PC-9 (cell line): ENCODE measurements at regions of chr19 and their contacts with region 1.

Region 1: GRCh38 chr19:51660975-51661600 is 14.5 kb upstream of the SIGLEC14 start:
- DNase-seq: peak; percentile 48 to 72
- H3K4me3 ChIP-seq: no peak overlapping the region
- H3K27ac ChIP-seq: no peak overlapping the region
- H3K4me1 ChIP-seq: no peaks in the 10 kb centered on the region
- H3K27me3 ChIP-seq: peaks cover 47% of the 10 kb centered on the region
- CTCF ChIP-seq: peak; percentile 81

Region 2: GRCh38 chr19:51473009-51473707 is 187.9 kb before region 1 on chr19:
- CTCF ChIA-PET with region 1: interaction called, 12 read pairs
- POLR2A ChIA-PET with region 1: no interaction called
- intact Hi-C with region 1: loop called (anchors 1 kb)
- DNase-seq: peak in 1 of 2 experiments; percentile 59
- H3K4me3 ChIP-seq: no peak overlapping the region
- H3K27ac ChIP-seq: no peak overlapping the region
- H3K4me1 ChIP-seq: no peaks in the 10 kb centered on the region
- H3K27me3 ChIP-seq: peaks cover 23% of the 10 kb centered on the region; the same call in 1 of the 2 replicates
- CTCF ChIP-seq: peak; percentile 90

Region 3: DNA sequence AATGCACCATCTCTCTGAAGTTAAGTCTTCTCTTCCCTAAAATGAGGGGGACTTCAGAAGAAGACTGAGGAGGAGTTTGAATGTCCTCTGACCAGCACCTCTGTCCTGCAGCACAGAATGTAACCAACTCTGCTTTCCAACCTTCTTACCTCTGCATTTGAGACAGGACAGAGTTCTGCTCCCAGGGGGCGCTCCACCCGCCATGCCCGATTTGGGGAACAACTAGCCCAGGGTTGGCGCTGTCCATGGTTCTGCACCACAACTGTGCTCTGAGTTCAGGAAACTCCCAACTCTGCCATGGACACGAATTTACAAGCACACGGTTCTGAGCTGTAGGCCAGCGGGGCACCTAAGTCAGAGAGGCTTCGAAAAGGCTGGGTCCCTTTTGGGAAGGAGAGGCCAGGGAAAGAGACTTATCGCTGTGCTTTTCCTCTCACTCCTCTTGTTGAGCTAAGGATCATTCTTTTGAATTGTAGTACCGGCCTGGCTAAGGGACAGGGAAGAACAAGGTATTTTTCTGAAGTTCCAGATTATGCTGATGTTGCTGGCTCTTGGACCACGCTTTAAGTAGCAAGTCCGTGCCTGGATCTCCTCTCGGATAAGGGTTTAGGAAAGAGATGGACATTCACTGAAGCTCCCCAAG is 53.0 kb before region 1 on chr19:
- CTCF ChIA-PET with region 1: no interaction called
- POLR2A ChIA-PET with region 1: no interaction called
- intact Hi-C with region 1: loop called (anchors 1 kb)
- DNase-seq: peak; percentile 64 to 82
- H3K4me3 ChIP-seq: no peak overlapping the region
- H3K27ac ChIP-seq: no peak overlapping the region
- H3K4me1 ChIP-seq: no peaks in the 10 kb centered on the region
- H3K27me3 ChIP-seq: peaks cover 52% of the 10 kb centered on the region
- CTCF ChIP-seq: peak; percentile 83

Region 4: GRCh38 chr19:51617856-51618255 is 43.2 kb before region 1 on chr19:
- CTCF ChIA-PET with region 1: no interaction called
- POLR2A ChIA-PET with region 1: no interaction called
- intact Hi-C with region 1: loop called (anchors 2 kb)
- DNase-seq: no peak
- H3K4me3 ChIP-seq: no peak overlapping the region
- H3K27ac ChIP-seq: no peak overlapping the region
- H3K4me1 ChIP-seq: no peaks in the 10 kb centered on the region
- H3K27me3 ChIP-seq: peaks cover 90% of the 10 kb centered on the region
- CTCF ChIP-seq: no peak

Region 5: GRCh38 chr19:52221831-52222375 is 560.8 kb after region 1 on chr19:
- CTCF ChIA-PET with region 1: no interaction called
- POLR2A ChIA-PET with region 1: no interaction called
- intact Hi-C with region 1: no loop called
- DNase-seq: no peak
- H3K4me3 ChIP-seq: no peak overlapping the region
- H3K27ac ChIP-seq: no peak overlapping the region
- H3K4me1 ChIP-seq: no peaks in the 10 kb centered on the region
- H3K27me3 ChIP-seq: no peaks in the 10 kb centered on the region
- CTCF ChIP-seq: no peak